ENCODE measurements at regions of chr2 and their contacts with region 1.

Region 1: GRCh38 chr2:33372940-33373553 is 103.4 kb upstream of the RASGRP3 start:
- DNase-seq: no peak
- ATAC-seq: peak; percentile 63
- H3K4me3 Mint-ChIP-seq: no peak overlapping the region
- H3K27ac Mint-ChIP-seq: no peak overlapping the region
- H3K4me1 Mint-ChIP-seq: no peaks in the 10 kb centered on the region
- H3K27me3 Mint-ChIP-seq: peaks cover 3% of the 10 kb centered on the region

Region 2: DNA sequence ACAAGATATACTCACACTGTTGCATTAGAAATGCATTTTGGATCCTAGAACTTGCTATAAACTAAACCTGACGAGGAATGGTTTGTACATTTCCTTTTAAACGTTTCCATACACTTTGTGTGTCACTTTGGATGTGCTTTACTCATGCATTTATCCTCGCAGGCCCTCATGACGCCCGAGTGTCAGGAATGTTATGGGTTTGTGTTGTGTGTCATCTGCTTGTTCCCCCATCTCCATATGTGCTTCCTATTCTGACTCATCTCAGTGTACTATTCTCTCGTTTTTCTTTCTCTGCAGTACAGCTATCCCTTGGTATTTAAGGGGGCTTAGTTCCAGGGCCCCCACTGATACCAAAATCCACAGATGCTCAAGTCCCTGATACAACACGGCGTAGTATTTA is 18.1 kb before region 1 on chr2:
- CTCF ChIA-PET with region 1: interaction called, 10 read pairs
- DNase-seq: no peak
- ATAC-seq: no peak
- H3K4me3 Mint-ChIP-seq: no peak overlapping the region
- H3K27ac Mint-ChIP-seq: no peak overlapping the region
- H3K4me1 Mint-ChIP-seq: no peaks in the 10 kb centered on the region
- H3K27me3 Mint-ChIP-seq: peaks cover 4% of the 10 kb centered on the region